AG04450 (cell line): ENCODE measurements at regions of chr16 and their contacts with region 1.

Region 1: DNA sequence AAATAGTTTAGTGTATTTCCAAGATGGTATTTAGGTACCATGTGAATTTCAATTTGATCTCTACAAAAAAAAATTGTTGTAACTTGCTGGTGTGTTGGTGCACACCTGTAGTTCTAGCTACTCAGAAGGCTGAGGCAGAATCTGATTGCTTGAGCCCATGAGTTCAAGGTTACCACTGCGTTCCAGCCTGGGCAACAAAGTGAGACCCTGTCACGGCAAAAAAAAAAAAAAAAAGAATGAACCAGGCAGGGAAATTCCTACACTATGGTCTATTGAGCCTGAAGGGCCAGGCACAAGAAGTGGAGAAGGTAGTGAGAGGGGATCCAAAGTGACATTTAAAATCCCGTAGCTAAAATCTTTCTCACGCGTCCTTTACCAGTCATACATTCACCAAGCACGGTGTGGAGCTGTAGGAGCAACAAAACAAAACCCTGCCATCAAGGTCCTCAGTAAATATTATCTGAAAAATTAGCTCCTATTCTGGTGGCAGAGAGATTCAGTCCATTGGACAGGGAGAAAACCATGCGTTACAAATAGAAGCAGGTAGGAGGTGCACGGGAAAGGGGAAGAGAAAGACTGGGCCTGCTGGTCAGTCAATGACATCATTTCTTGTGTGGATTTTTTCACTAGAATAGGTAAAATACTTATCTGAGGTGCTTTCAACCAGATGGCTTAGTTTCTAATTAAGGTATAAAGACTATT is 27.3 kb downstream of the TXNDC11 start:
- DNase-seq: no peak
- H3K4me3 ChIP-seq: no peak overlapping the region
- H3K27ac ChIP-seq: no peak overlapping the region
- H3K27me3 ChIP-seq: no peaks in the 10 kb centered on the region
- CTCF ChIP-seq: no peak

Region 2: DNA sequence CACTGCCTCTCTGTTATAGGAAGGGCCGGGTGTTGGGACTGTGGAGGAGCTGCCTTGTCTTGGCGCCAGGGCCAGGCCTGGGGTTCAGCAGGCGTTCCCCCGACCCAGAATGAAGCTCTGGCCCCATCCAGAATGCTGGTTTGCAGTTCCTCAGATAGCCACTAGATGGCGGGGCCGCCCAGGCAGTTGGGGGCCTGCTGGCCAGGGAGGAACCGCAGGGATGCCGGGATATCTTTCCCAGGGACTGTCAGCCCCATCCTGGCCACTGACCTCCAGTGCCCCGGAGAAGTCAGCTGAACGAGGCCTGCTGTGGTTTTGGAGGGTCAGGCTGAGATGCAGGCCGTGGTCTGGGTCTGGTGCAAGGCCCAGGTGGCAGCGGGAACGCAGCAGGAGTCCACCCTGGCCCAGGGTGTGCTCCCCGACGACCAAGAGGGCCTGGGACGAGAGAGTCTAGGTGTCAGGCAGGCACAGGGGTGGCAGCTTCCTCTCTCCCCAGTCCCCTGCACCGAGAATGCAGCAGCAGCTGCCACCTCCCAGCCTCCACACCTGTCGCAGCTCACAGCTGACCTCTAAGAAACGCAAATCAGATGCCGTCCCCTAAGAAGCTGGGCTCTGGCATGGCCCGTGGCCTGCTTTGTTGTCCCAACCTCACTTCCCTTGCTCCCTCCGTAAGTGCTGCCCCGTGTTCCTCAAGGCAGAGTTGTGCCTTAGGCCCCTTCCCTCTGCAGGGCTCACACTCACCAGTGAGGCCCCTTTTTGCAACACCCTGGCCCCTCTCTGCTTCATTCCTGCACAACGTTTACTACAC is 319.0 kb before region 1 on chr16:
- CTCF ChIA-PET with region 1: interaction called, 54 read pairs
- POLR2A ChIA-PET with region 1: no interaction called
- DNase-seq: peak; percentile 27
- H3K4me3 ChIP-seq: no peak overlapping the region
- H3K27ac ChIP-seq: no peak overlapping the region
- H3K27me3 ChIP-seq: no peaks in the 10 kb centered on the region
- CTCF ChIP-seq: peak; percentile 98

Region 3: DNA sequence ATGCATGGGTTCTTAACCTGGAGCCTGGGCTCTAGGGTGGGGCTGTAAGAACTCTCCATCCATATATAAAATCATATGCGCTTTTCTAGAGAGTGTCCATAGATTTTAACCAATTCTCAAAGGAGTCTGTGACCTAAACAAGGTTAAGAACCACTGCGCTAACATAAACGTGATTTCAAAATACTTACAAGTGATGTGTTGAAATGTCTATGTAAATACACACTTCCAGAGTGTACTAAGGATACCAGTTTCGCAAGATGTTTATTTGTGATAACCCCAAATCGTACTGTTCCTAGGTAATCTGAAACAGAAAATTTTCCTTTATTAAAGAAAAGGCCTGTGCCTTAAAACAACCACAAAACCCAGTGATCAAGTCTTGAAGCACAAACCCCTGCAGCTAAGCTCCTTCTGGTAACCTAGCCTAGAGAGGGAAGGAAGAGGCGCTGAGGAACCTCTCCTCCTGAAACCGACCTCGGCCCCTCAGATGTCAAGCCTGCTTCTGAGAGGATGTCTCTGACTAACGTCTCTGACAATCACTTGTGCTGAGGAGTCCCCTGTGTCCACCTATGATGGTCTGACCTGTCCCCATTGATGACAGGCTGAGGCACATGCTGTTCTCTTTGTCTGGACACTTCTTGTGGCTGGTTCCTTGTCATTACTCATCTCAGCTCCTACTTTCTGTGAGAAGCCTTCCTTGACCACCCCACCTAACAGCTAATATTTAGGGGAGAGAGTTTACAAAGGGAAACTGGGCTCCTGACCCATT is 14.9 kb before region 1 on chr16:
- CTCF ChIA-PET with region 1: interaction called, 14 read pairs
- POLR2A ChIA-PET with region 1: no interaction called
- DNase-seq: no peak
- H3K4me3 ChIP-seq: no peak overlapping the region
- H3K27ac ChIP-seq: no peak overlapping the region
- H3K27me3 ChIP-seq: no peaks in the 10 kb centered on the region
- CTCF ChIP-seq: no peak

Region 4: DNA sequence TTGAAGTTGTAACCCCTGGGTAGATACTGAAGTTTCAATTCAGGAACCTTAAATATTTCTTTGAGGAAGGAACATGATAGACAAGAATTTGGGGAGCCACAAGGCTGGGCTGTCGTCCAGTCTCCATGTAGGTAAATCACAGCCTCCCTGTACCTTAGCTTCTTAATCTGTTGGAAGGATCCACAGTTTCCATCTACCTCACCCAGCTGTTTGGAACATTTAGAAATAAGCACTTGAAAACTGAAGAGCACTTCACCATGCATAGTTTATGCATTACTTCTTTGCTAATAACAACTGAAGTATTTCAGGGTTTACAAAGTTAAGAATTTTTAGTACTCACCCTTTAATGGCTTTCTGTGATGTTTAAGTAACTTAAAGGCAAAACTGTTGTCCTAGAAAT is 10.1 kb after region 1 on chr16:
- CTCF ChIA-PET with region 1: interaction called, 15 read pairs
- POLR2A ChIA-PET with region 1: no interaction called
- DNase-seq: no peak
- H3K4me3 ChIP-seq: no peak overlapping the region
- H3K27ac ChIP-seq: no peak overlapping the region
- H3K27me3 ChIP-seq: no peaks in the 10 kb centered on the region
- CTCF ChIP-seq: no peak

Region 5: GRCh38 chr16:11735787-11736186 is 20.4 kb after region 1 on chr16:
- CTCF ChIA-PET with region 1: interaction called, 12 read pairs
- POLR2A ChIA-PET with region 1: no interaction called
- DNase-seq: no peak
- H3K4me3 ChIP-seq: no peak overlapping the region
- H3K27ac ChIP-seq: no peak overlapping the region
- H3K27me3 ChIP-seq: no peaks in the 10 kb centered on the region
- CTCF ChIP-seq: no peak

Region 6: DNA sequence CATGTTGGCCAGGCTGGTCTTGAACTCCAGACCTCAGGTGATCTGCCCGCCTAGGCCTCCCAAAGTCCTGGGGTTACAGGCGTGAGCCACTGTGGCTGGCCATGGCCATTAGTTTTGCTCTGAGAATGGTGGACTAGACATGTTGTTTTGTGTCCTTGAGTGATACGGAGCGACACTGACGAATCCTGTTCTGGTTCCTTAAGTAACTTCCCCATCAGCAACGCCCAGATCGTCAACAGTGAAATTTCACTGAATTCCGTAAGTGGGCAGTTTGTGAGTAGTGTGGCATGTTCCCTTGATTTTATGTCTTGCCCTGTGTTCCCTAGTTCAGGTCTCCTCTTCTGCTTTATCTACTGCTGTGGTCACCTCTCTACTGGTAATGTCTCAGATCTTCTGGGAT is 328.6 kb after region 1 on chr16:
- CTCF ChIA-PET with region 1: no interaction called
- POLR2A ChIA-PET with region 1: no interaction called
- DNase-seq: no peak
- H3K4me3 ChIP-seq: no peak overlapping the region
- H3K27ac ChIP-seq: no peak overlapping the region
- H3K27me3 ChIP-seq: no peaks in the 10 kb centered on the region
- CTCF ChIP-seq: no peak